ENCODE measurements at regions of chrX and their contacts with region 1.

Region 1: DNA sequence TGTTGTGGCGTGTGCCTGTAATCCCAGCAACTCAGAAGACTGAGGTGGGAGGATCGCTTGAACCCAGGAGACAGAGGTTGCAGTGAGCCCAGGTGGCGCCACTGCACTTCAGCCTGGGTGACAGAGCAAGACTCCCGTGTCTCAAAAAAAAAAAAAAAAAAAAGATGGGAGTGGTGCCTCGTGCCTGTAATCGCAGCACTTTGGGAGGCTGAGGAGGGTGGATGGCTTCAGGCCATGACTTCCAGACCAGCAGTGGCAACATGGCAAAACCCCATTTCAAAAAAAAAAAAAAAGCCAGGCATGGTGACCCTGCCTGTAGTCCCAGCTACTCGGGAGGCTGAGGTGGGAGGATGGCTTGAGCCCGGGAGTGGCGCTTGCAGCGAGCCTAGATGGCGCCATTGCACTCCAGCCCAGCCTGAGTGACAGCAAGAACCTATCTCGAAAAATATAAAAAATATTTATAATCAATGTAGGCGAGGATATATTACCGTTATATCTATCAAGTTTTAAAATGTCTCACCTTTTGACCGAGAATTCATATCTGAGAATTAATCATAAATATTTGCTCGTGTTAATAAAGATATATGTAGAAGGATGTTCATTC is 27.0 kb downstream of the EIF2S3 start:
- DNase-seq: peak; percentile 59 to 87
- H3K4me3 ChIP-seq: no peak overlapping the region
- H3K4me1 ChIP-seq: peaks cover 7% of the 10 kb centered on the region
- H3K27me3 ChIP-seq: no peaks in the 10 kb centered on the region

Region 2: DNA sequence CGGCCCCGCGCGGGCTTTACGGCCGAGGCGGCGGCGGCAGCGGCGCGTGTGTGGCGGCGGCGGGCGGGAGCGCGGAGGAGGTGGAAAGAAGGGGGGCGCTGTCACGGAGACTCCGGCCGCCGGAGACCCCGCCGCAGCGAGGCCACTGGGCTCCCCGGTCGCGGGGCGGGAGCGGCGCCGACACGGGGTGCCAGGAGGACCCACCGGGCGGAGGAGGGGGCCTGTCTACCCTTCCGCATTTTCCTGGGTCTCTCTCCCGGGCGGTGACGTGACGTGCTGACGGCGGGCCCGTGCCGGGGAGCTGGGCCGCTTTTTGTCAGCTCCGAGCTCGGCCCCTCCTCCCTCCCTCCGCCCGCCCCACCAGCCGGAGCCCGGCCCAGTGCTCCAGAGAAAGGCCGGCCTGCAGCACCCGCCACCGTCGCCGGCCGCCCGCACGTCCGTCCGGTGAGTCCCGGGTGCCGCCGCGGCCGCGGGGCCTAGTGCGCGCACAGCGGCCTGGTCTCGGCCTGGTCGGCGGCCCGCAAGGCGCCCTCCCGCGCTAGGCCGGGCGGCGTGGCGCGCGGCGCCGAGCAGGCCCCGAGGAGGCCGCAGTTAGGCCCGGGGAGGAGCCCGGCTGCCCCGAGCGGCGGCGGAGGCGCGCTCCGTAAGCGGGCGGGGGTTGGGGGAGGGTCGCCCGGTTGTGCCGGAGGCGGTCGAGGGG is 67.7 kb after region 1 on chrX and contains the start of gene ZFX:
- in situ Hi-C with region 1: loop called (anchors 10 kb)
- DNase-seq: peak in 1 of 2 experiments; percentile 83
- H3K4me3 ChIP-seq: peak within 1 kb of the TSS; percentile 75
- H3K4me1 ChIP-seq: peaks cover 66% of the 10 kb centered on the region
- H3K27me3 ChIP-seq: no peaks in the 10 kb centered on the region